ENCODE measurements at regions of chr1 and their contacts with region 1.

Region 1: DNA sequence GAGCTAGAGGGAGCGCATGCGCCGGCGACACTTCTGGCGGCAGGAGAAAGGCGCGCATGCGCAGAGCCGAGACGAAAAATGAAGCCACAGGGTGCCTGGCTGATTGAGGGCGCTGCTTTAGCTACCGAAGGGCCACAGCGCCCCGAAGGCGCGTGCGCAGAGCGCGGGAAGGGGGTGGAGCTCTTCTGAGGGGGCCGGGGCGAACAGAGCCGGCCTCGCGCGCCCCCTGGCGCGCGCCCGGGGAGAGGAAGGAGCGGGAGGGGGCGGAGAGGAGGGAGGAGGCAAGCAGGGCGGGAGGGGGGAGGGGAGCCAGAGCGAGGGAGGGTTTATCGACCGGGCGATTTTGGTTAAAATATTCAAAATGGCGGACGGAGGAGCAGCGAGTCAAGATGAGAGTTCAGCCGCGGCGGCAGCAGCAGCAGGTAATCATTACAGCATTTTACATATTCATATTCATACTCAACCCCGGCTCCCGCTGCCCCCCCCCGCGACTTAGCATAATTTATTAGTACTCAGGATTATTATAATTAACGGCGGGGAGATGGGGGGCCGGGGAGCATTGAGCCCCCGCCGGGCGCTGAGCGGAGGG is at the start of gene POU2F1:
- DNase-seq: peak; percentile 96
- ATAC-seq: peak; percentile 85
- H3K4me3 ChIP-seq: peak within 1 kb of the TSS; percentile 69 to 75
- H3K27ac ChIP-seq: peak within 1 kb of the TSS; percentile 95
- H3K4me1 ChIP-seq: peaks cover 14 to 39% of the 10 kb centered on the region in 2 experiments
- H3K27me3 ChIP-seq: no peaks in the 10 kb centered on the region
- CTCF ChIP-seq: peak; percentile 61 to 70 (median 66); a peak in 5 of 6 replicates
- POLR2A ChIP-seq: no peak
- RAD21 ChIP-seq: peak; percentile 64
- total RNA-seq, gene POU2F1: 24.5 TPM

Region 2: DNA sequence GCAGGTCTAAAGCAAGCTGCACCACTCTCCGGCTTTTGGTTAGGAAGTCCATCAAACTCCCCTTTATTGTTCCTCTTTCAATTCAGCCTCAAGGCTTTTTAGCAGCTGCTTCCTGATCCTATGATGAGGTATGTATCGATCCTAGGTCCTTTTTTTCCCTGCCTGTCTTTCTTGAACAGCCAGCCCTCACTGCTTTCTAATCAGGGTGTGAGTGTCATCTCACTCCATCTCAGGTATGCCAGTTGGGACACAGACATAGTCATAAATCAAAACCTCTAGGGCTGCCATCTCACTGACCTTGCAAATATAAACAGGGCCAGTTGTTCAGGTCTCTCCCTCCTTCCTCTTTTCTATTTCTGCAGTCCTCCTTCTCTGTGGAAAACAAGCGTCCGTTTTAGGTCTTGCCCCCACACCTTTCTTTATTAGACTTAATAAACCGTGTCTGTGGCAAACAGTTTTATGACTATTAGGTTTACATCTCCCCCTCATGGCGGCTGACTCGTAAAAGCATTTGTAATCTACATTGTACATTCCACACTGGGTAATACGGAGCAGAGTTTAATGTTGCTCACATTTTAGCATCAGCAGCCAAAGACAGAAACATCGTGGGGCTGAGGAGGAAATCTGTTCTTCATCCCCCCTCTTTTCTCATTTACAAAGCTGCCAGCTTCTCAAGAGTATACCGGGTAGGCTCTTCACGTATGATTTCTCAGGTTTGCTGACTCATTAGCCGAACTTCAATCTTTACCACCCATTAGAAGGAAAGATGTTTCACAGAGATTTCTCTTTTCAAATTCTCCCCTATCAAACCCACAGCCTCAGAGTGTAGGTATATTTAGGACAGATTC is 115.1 kb before region 1 on chr1:
- CTCF ChIA-PET with region 1: no interaction called
- POLR2A ChIA-PET with region 1: no interaction called
- RAD21 ChIA-PET with region 1: no interaction called
- intact Hi-C with region 1: no loop called
- DNase-seq: no peak
- ATAC-seq: no peak
- H3K4me3 ChIP-seq: no peak overlapping the region
- H3K27ac ChIP-seq: no peak overlapping the region
- H3K4me1 ChIP-seq: peaks cover 0 to 26% of the 10 kb centered on the region in 2 experiments; a peak in 2 of 4 replicates
- H3K27me3 ChIP-seq: no peaks in the 10 kb centered on the region
- CTCF ChIP-seq: no peak
- POLR2A ChIP-seq: no peak
- RAD21 ChIP-seq: no peak

Region 3: DNA sequence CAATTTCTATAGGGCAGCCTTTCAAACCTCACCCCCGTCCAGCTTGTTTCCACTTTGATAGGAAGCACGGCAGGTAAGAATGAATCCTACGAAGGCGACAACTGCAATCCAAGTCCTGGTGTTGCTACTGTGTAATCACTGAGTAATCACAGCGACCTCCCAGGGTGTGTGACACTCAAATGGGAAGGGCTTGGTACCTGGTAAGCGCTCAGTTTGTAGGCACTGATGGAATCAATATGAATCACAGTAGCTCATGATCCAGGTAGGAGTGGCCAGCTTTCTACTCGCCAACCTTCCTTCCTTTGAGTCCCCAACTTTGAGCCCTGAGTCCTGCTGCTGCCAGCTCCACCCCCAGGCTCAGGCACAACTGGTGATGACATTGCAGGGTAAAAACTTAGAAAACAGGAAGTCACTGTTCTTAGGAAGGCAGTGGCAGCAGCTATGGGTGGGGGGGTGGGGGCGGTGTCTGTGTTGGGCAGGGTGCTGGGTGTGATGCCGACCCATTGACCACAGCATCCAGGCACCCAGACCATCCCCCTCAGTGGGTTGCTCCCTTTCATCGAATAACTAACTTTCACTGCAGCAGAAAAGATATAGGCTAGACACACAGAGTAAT is 227.0 kb after region 1 on chr1:
- CTCF ChIA-PET with region 1: no interaction called
- POLR2A ChIA-PET with region 1: interaction called, 10 read pairs
- RAD21 ChIA-PET with region 1: no interaction called
- intact Hi-C with region 1: loop called (anchors 1 kb)
- DNase-seq: peak; percentile 77
- ATAC-seq: peak; percentile 89
- H3K4me3 ChIP-seq: peak overlapping the region in 1 of 2 experiments; percentile 16; a peak in 2 of 4 replicates
- H3K27ac ChIP-seq: no peak overlapping the region
- H3K4me1 ChIP-seq: peaks cover 0 to 13% of the 10 kb centered on the region in 2 experiments; a peak in 2 of 4 replicates
- H3K27me3 ChIP-seq: no peaks in the 10 kb centered on the region
- CTCF ChIP-seq: no peak
- POLR2A ChIP-seq: no peak
- RAD21 ChIP-seq: no peak

Measured in HCT116 (cell line).